Thyroid gland (tissue), 4 donors: ENCODE measurements at regions of chr19 and their contacts with region 1.

Region 1: GRCh38 chr19:11035441-11036377 is 53.6 kb upstream of the LDLR start:
- DNase-seq: peak; percentile 89 to 95
- H3K4me3 ChIP-seq: no peak overlapping the region
- H3K27ac ChIP-seq: no peak overlapping the region
- H3K4me1 ChIP-seq: no peaks in the 10 kb centered on the region
- H3K27me3 ChIP-seq: no peaks in the 10 kb centered on the region
- CTCF ChIP-seq: peak; percentile 46 to 90 (median 77)
- POLR2A ChIP-seq: no peak

Region 2: GRCh38 chr19:11127905-11128304 is 92.2 kb after region 1 on chr19:
- intact Hi-C with region 1: loop called (anchors 2 kb)
- DNase-seq: no peak
- H3K4me3 ChIP-seq: no peak overlapping the region
- H3K27ac ChIP-seq: no peak overlapping the region
- H3K4me1 ChIP-seq: peaks cover 0 to 10% of the 10 kb centered on the region in 2 donors
- H3K27me3 ChIP-seq: no peaks in the 10 kb centered on the region
- CTCF ChIP-seq: no peak
- POLR2A ChIP-seq: no peak

Region 3: DNA sequence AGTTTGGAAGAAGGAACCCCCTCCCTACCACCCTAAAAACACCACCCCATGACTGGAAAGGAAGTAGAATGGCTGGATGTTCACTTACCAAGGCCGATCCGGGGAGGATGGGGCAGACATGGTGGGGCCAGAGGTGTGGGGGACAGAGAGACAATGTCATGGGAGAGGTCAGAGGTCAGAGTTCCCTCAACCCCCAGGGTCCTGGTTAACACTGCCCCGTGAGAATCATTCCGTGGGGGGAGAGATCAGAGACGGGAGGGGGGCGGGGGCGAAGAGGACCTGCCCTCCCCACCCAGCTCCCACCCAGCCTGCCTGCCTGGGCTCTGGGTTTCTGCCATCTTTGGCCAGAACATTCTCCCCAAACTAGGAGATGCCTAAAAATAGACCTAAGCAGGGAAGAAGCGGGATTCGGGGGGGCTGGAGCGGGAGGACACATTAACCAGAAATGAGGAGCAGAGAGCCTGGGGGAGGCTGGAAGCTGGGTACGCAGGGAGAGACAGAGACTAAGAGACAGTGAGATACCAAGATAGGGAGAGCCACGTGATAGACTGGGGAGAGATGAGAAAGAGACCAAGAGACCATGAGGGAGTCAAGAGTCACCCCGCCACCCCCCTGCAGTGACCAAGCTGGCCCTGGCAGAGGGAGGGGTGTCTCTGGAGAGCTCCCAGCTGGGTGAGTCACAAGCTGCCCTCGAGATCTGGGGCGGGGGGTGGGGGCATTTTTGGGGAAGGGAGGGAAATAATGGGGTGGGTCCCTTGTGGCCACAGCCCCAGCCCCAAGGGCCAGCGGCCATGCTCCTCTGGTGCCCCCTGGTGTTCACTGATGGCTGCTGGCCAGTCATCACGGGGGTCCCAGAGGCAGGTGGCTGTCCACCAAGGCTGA is 167.7 kb after region 1 on chr19:
- intact Hi-C with region 1: loop called (anchors 5 kb)
- DNase-seq: peak; percentile 83 to 89
- H3K4me3 ChIP-seq: no peak overlapping the region
- H3K27ac ChIP-seq: peak overlapping the region; percentile 92 to 95 (median 93)
- H3K4me1 ChIP-seq: peaks cover 26 to 36% of the 10 kb centered on the region in 2 donors
- H3K27me3 ChIP-seq: no peaks in the 10 kb centered on the region
- CTCF ChIP-seq: peak; percentile 74 to 92 (median 82)
- POLR2A ChIP-seq: no peak